GM10248 (cell line): ENCODE measurements at regions of chr20 and their contacts with region 1.

Region 1: DNA sequence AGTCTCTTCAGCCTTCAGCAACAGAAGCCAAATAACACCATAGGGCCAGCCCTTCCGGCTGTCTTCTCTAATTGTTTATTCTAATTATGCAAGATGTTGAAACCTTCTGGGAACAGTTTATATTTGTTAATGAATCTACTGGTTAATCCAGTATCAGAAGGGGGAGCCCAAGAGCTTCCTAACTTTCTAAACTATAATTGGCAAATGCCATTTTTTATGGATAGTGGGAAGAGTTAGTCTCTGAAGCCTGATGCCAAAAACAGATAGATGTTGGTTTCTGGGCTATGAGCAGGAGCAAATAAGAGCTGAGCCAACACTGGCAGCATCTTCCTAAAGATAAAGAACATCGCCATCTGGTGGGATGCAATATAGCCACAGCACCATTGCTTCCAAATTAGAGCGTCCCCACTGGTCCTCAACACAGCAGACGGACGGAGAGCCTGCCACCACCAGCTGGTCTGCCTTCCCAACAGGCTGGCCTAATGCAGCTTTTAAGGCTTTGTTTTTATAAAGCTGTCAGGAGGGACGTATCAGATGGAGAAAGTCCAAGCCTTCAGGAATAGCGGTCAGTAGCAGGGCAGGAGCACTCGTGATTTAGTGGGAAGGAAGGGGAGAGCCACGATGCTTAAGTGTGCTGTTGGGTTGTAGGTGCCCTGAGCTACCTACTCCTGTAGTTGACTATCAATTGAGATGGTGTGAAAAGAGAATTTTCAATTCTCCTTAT is 118.8 kb downstream of the RALGAPA2 start:
- DNase-seq: peak; percentile 54
- CTCF ChIP-seq: peak; percentile 22

Region 2: GRCh38 chr20:20083807-20084206 is 509.8 kb before region 1 on chr20:
- CTCF ChIA-PET with region 1: interaction called, 16 read pairs
- POLR2A ChIA-PET with region 1: no interaction called
- DNase-seq: peak; percentile 46
- CTCF ChIP-seq: peak; percentile 50

Region 3: GRCh38 chr20:20561841-20562240 is 31.8 kb before region 1 on chr20:
- CTCF ChIA-PET with region 1: interaction called, 14 read pairs
- POLR2A ChIA-PET with region 1: no interaction called
- DNase-seq: no peak
- CTCF ChIP-seq: no peak

Region 4: GRCh38 chr20:20582734-20583133 is 10.9 kb before region 1 on chr20:
- CTCF ChIA-PET with region 1: interaction called, 28 read pairs
- POLR2A ChIA-PET with region 1: no interaction called
- DNase-seq: no peak
- CTCF ChIP-seq: no peak